Activated T-helper 1 cell treated with anti-CD3 and anti-CD28 coated beads, Interleukin-12 subunit alpha, Interleukin-12 subunit beta, Interleukin-2, Interleukin-4 antibody, amounts not matched to agents 30 ng/mL and 10 ng/mL and 1 ng/mL, durations not matched to agents 14 hours and 24 hours and 36 hours (primary cell): ENCODE measurements at regions of chr2 and their contacts with region 1.

Region 1: GRCh38 chr2:168455648-168456520 is at the start of gene CERS6:
- DNase-seq: peak; percentile 85
- H3K4me3 Mint-ChIP-seq: peak within 1 kb of the TSS; percentile 93
- H3K27ac Mint-ChIP-seq: peak within 1 kb of the TSS; percentile 80
- H3K4me1 Mint-ChIP-seq: peaks cover 37% of the 10 kb centered on the region
- H3K27me3 Mint-ChIP-seq: peaks cover 3% of the 10 kb centered on the region
- total RNA-seq, gene CERS6: 27.0 and 27.1 TPM in 2 replicates

Region 2: DNA sequence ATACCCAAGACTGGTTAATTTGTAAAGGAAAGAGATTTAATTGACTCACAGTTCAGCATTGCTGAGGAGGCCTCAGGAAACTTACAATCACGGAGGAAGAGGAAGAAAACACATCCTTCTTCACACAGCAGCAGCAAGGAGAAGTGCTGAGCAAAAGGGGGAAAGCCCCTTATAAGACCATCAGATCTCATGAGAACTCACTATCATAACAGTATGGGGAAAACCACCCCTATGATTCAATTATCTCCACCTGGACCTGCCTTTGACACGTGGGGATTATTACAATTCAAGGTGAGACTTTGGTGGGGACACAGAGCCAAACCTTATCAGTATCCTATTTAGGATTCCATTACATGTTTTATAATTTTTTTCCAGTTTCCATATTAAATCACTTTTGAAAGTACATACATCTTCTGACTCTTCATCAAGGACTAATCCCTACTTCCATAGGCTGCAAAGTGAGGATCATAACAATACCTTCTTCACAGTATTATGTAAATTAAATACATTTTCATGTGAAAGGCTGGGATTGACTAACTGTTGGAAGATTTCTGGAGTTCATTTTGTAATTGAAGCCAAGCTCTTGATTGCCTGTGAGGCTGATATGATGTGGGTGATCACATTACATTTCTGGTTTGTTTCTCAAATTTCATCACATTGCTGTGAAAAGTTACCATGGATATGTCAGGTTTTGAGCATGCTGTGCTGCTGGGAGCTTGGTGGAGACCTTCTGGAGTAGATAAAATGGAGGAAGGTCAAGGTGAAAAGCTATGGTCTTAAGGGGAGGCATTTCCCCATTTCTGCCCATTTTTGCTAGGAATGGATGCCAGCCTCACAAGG is 31.6 kb before region 1 on chr2:
- intact Hi-C with region 1: loop called (anchors 5 kb)
- DNase-seq: no peak
- H3K4me3 Mint-ChIP-seq: no peak overlapping the region
- H3K27ac Mint-ChIP-seq: no peak overlapping the region
- H3K4me1 Mint-ChIP-seq: peaks cover 28% of the 10 kb centered on the region
- H3K27me3 Mint-ChIP-seq: peaks cover 2% of the 10 kb centered on the region

Region 3: DNA sequence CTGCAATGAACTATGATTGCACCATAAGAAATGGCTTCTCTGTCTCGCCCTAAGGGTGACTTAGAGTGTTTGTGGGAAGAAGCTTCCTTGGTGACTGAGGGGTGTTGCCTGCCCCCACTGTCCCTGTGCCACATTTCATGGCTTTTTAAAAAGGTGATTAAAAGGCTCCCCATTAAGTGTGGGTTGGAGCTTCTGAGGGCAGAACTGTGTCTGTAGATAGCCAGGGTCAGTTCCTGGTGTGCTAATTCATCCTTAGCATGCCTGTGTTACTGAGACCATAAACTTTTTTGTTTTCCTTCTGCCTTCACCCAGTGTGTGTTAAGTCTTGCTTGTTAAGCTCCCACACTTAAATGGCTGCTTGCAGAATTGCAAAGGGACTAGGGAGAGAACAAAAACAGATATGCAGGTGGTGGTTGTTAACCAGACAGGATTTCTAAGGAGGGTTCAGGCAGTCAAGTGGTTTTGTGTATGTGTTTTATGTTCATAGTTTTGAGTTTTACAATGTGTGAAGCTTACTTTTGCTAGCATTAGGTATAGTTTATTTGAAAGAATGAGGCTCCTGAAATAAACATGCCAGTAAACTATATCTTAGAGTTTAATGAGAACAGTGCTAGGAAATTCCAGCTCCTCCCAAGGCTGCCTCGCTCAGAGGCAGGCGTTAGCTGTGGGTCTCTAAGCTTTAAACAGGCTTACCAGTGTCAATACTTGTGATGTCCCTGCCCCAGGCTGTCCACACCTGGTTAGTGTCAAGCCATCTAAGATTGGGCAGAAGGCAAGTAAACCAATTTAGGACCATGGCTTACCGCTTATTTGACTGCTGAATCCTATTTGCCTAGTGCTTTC is 14.7 kb after region 1 on chr2:
- intact Hi-C with region 1: loop called (anchors 1 kb)
- DNase-seq: no peak
- H3K4me3 Mint-ChIP-seq: no peak overlapping the region
- H3K27ac Mint-ChIP-seq: no peak overlapping the region
- H3K4me1 Mint-ChIP-seq: peaks cover 45% of the 10 kb centered on the region
- H3K27me3 Mint-ChIP-seq: no peaks in the 10 kb centered on the region

Region 4: GRCh38 chr2:168495524-168495923 is 39.6 kb after region 1 on chr2:
- intact Hi-C with region 1: loop called (anchors 1 kb)
- DNase-seq: no peak
- H3K4me3 Mint-ChIP-seq: no peak overlapping the region
- H3K27ac Mint-ChIP-seq: peak overlapping the region; percentile 65
- H3K4me1 Mint-ChIP-seq: peaks cover 62% of the 10 kb centered on the region
- H3K27me3 Mint-ChIP-seq: peaks cover 3% of the 10 kb centered on the region

Region 5: GRCh38 chr2:168536925-168537466 is 81.1 kb after region 1 on chr2:
- intact Hi-C with region 1: loop called (anchors 5 kb)
- DNase-seq: no peak
- H3K4me3 Mint-ChIP-seq: no peak overlapping the region
- H3K27ac Mint-ChIP-seq: no peak overlapping the region
- H3K4me1 Mint-ChIP-seq: peaks cover 44% of the 10 kb centered on the region
- H3K27me3 Mint-ChIP-seq: no peaks in the 10 kb centered on the region